ENCODE measurements at regions of chr2 and their contacts with region 1.

Region 1: GRCh38 chr2:60998628-60999545 is 18.6 kb upstream of the PEX13 start:
- DNase-seq: no peak
- H3K4me3 ChIP-seq: no peak overlapping the region
- H3K27ac ChIP-seq: no peak overlapping the region
- H3K4me1 ChIP-seq: no peaks in the 10 kb centered on the region
- H3K27me3 ChIP-seq: no peaks in the 10 kb centered on the region
- CTCF ChIP-seq: peak in 2 of 3 experiments; percentile 23 to 55; a peak in 2 of 4 replicates
- EP300 ChIP-seq: no peak
- POLR2A ChIP-seq: no peak
- RAD21 ChIP-seq: peak; percentile 73 to 83

Region 2: DNA sequence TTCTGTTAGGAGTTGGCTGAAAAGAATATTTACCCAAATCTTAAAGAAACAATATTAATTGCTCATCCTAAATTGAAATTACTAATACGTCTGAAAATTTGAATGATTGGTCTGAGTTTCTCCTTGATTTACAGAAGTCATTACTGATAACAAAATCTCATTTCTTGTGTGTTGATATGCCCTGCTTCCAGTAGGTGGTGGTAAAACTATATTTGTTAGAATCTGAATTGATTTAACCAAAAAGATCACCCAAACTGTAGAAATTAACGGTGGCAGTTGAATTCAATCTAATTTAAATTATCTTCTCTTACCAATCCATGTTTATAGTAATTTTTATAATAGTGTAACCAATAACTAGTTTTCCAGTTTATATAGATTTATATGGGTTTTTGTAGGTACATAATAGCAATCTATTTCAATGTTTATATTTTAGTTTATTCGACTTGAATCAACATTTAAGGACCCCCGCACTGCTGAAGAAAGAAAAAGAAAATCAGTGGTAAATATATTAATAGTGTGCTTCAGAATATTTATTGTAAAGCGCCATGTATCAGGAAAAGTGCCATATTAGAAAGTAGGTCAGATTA is 204.5 kb before region 1 on chr2:
- CTCF ChIA-PET with region 1: interaction called, 11 read pairs
- POLR2A ChIA-PET with region 1: no interaction called
- DNase-seq: no peak
- H3K4me3 ChIP-seq: no peak overlapping the region
- H3K27ac ChIP-seq: no peak overlapping the region
- H3K4me1 ChIP-seq: no peaks in the 10 kb centered on the region
- H3K27me3 ChIP-seq: no peaks in the 10 kb centered on the region
- CTCF ChIP-seq: peak in 2 of 3 experiments; percentile 9 to 41; a peak in 2 of 4 replicates
- EP300 ChIP-seq: no peak
- POLR2A ChIP-seq: no peak
- RAD21 ChIP-seq: peak; percentile 48 to 63

Region 3: GRCh38 chr2:60806988-60807681 is 191.8 kb before region 1 on chr2:
- CTCF ChIA-PET with region 1: interaction called, 69 read pairs
- POLR2A ChIA-PET with region 1: interaction called, 3 read pairs
- DNase-seq: peak in 1 of 2 experiments; percentile 35
- H3K4me3 ChIP-seq: no peak overlapping the region
- H3K27ac ChIP-seq: no peak overlapping the region
- H3K4me1 ChIP-seq: no peaks in the 10 kb centered on the region
- H3K27me3 ChIP-seq: no peaks in the 10 kb centered on the region
- CTCF ChIP-seq: no peak
- EP300 ChIP-seq: no peak
- POLR2A ChIP-seq: no peak
- RAD21 ChIP-seq: no peak

Region 4: GRCh38 chr2:60818272-60818671 is 180.6 kb before region 1 on chr2:
- CTCF ChIA-PET with region 1: interaction called, 16 read pairs
- POLR2A ChIA-PET with region 1: no interaction called
- DNase-seq: no peak
- H3K4me3 ChIP-seq: no peak overlapping the region
- H3K27ac ChIP-seq: no peak overlapping the region
- H3K4me1 ChIP-seq: 0 out of 7 replicates have a peak, but pooled peaks cover 0 to 2% (median 0%) of the 10 kb centered on the region in 4 experiments
- H3K27me3 ChIP-seq: no peaks in the 10 kb centered on the region
- CTCF ChIP-seq: peak in 2 of 3 experiments; percentile 0 to 10; a peak in 2 of 4 replicates
- EP300 ChIP-seq: no peak
- POLR2A ChIP-seq: no peak
- RAD21 ChIP-seq: peak; percentile 32 to 50

Region 5: GRCh38 chr2:61074100-61074499 is 75.2 kb after region 1 on chr2:
- CTCF ChIA-PET with region 1: no interaction called
- POLR2A ChIA-PET with region 1: no interaction called
- DNase-seq: no peak
- H3K4me3 ChIP-seq: no peak overlapping the region
- H3K27ac ChIP-seq: no peak overlapping the region
- H3K4me1 ChIP-seq: no peaks in the 10 kb centered on the region
- H3K27me3 ChIP-seq: no peaks in the 10 kb centered on the region
- CTCF ChIP-seq: no peak
- EP300 ChIP-seq: no peak
- POLR2A ChIP-seq: no peak
- RAD21 ChIP-seq: no peak

Region 6: GRCh38 chr2:61125123-61125710 is 126.3 kb after region 1 on chr2:
- CTCF ChIA-PET with region 1: no interaction called
- POLR2A ChIA-PET with region 1: no interaction called
- DNase-seq: no peak
- H3K4me3 ChIP-seq: no peak overlapping the region
- H3K27ac ChIP-seq: no peak overlapping the region
- H3K4me1 ChIP-seq: peaks cover 0 to 4% (median 0%) of the 10 kb centered on the region in 4 experiments; a peak in 2 of 7 replicates
- H3K27me3 ChIP-seq: no peaks in the 10 kb centered on the region
- CTCF ChIP-seq: no peak
- EP300 ChIP-seq: no peak
- POLR2A ChIP-seq: no peak
- RAD21 ChIP-seq: no peak